ENCODE measurements at regions of chr7 and their contacts with region 1.

Region 1: GRCh38 chr7:50298811-50299562 is 5.5 kb upstream of the IKZF1 start:
- DNase-seq: no peak
- ATAC-seq: no peak
- H3K4me3 ChIP-seq: no peak overlapping the region
- H3K4me3 Mint-ChIP-seq: no peak overlapping the region
- H3K27ac ChIP-seq: no peak overlapping the region
- H3K27ac Mint-ChIP-seq: peak overlapping the region; percentile 6
- H3K4me1 ChIP-seq: peaks cover 33% of the 10 kb centered on the region
- H3K4me1 Mint-ChIP-seq: peaks cover 47% of the 10 kb centered on the region
- H3K27me3 ChIP-seq: no peaks in the 10 kb centered on the region
- H3K27me3 Mint-ChIP-seq: no peaks in the 10 kb centered on the region
- CTCF ChIP-seq: no peak

Region 2: GRCh38 chr7:50281680-50282445 is 17.1 kb before region 1 on chr7:
- CTCF ChIA-PET with region 1: interaction called, 5 read pairs
- POLR2A ChIA-PET with region 1: no interaction called
- intact Hi-C with region 1: loop called (anchors 2 kb)
- DNase-seq: peak in 2 of 9 experiments; percentile 38 to 65
- ATAC-seq: peak; percentile 81
- H3K4me3 ChIP-seq: peak overlapping the region in 1 of 2 experiments; percentile 30
- H3K4me3 Mint-ChIP-seq: peak overlapping the region; percentile 80
- H3K27ac ChIP-seq: peak overlapping the region; percentile 45 to 62
- H3K27ac Mint-ChIP-seq: peak overlapping the region; percentile 96
- H3K4me1 ChIP-seq: peaks cover 53% of the 10 kb centered on the region
- H3K4me1 Mint-ChIP-seq: peaks cover 57% of the 10 kb centered on the region
- H3K27me3 ChIP-seq: no peaks in the 10 kb centered on the region
- H3K27me3 Mint-ChIP-seq: no peaks in the 10 kb centered on the region
- CTCF ChIP-seq: no peak

Region 3: DNA sequence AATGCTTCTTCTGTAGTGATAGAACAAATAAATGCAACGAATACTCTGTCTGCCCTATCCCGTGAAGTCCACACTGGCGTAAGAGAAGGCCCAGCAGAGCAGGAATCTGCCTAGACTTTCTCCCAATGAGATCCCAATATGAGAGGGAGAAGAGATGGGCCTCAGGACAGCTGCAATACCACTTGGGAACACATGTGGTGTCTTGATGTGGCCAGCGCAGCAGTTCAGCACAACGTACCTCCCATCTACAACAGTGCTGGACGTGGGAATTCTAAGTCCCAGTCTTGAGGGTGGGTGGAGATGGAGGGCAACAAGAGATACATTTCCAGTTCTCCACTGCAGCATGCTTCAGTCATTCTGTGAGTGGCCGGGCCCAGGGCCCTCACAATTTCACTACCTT is 105.4 kb after region 1 on chr7:
- CTCF ChIA-PET with region 1: no interaction called
- POLR2A ChIA-PET with region 1: no interaction called
- intact Hi-C with region 1: no loop called
- DNase-seq: no peak
- ATAC-seq: no peak
- H3K4me3 ChIP-seq: no peak overlapping the region
- H3K4me3 Mint-ChIP-seq: no peak overlapping the region
- H3K27ac ChIP-seq: no peak overlapping the region
- H3K27ac Mint-ChIP-seq: peak overlapping the region; percentile 69
- H3K4me1 ChIP-seq: peaks cover 17% of the 10 kb centered on the region
- H3K4me1 Mint-ChIP-seq: peaks cover 83% of the 10 kb centered on the region
- H3K27me3 ChIP-seq: no peaks in the 10 kb centered on the region
- H3K27me3 Mint-ChIP-seq: no peaks in the 10 kb centered on the region
- CTCF ChIP-seq: no peak